ENCODE measurements at regions of chr20 and their contacts with region 1.

Region 1: GRCh38 chr20:9609887-9610502 is 95.6 kb downstream of the LAMP5 start:
- DNase-seq: peak; percentile 36
- H3K4me3 ChIP-seq: no peak overlapping the region
- H3K27ac ChIP-seq: no peak overlapping the region
- H3K27me3 ChIP-seq: peaks cover 8% of the 10 kb centered on the region
- CTCF ChIP-seq: peak; percentile 70

Region 2: GRCh38 chr20:9417665-9418064 is 192.3 kb before region 1 on chr20:
- CTCF ChIA-PET with region 1: interaction called, 34 read pairs
- POLR2A ChIA-PET with region 1: no interaction called
- DNase-seq: no peak
- H3K4me3 ChIP-seq: no peak overlapping the region
- H3K27ac ChIP-seq: no peak overlapping the region
- H3K27me3 ChIP-seq: no peaks in the 10 kb centered on the region
- CTCF ChIP-seq: no peak

Region 3: DNA sequence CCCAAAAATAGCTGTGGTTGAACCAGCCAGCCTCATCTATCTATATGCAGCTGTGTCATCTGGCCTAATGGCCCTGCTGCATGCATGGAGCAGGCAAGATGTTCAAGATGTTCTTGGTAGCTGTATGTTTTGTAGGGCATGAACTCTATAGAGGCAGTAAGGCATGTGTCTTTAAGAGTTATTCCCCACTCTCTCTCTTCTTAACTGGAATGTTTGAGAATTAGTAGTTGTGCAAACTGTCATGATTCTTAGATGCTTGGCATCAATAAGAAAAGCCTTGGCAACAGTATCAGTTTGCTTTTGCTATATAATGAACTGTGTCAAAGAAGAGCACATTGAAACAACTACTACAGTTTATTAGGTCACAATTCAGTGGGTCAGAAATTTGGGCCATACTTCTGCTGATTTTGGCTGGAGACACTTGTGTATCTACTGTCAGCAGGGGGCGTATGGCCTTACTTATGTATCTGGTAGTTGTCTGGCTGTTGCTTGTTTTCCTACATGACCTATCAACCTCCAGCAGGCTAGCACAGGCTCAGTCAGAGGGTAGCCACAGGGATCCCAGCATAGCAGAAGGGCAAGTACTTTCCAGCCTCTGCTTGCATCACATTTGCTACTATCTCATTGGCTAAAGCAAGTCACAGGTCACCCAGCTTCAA is 151.7 kb before region 1 on chr20:
- CTCF ChIA-PET with region 1: interaction called, 39 read pairs
- POLR2A ChIA-PET with region 1: no interaction called
- DNase-seq: no peak
- H3K4me3 ChIP-seq: no peak overlapping the region
- H3K27ac ChIP-seq: no peak overlapping the region
- H3K27me3 ChIP-seq: no peaks in the 10 kb centered on the region
- CTCF ChIP-seq: peak; percentile 34; the same call in 1 of the 2 replicates

Region 4: GRCh38 chr20:9496155-9496554 is 113.8 kb before region 1 on chr20:
- CTCF ChIA-PET with region 1: interaction called, 15 read pairs
- POLR2A ChIA-PET with region 1: no interaction called
- DNase-seq: no peak
- H3K4me3 ChIP-seq: no peak overlapping the region
- H3K27ac ChIP-seq: no peak overlapping the region
- H3K27me3 ChIP-seq: peaks cover 2% of the 10 kb centered on the region
- CTCF ChIP-seq: no peak

Region 5: DNA sequence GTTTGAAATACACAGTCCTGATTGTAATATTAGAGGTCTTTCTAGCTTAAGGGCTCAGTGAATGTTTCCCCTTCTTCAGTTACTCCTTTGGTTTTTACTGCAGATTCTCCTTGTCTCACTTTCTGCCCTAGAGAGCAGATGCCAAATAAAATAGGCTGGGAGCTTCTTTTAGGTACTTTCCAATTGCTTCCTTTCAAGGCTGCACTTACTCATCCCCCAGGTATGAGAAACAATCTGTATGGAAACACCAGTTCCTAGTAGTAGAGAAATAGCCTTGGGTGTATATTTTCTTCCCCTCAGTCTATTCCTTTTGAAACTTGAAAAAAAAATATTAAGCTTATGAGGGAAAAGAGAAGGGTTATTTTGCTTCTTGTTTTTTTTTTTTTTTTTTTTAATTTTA is 89.2 kb after region 1 on chr20:
- CTCF ChIA-PET with region 1: interaction called, 14 read pairs
- POLR2A ChIA-PET with region 1: no interaction called
- DNase-seq: no peak
- H3K4me3 ChIP-seq: no peak overlapping the region
- H3K27ac ChIP-seq: no peak overlapping the region
- H3K27me3 ChIP-seq: no peaks in the 10 kb centered on the region
- CTCF ChIP-seq: no peak

Region 6: GRCh38 chr20:9736373-9736772 is 126.4 kb after region 1 on chr20:
- CTCF ChIA-PET with region 1: no interaction called
- POLR2A ChIA-PET with region 1: no interaction called
- DNase-seq: no peak
- H3K4me3 ChIP-seq: no peak overlapping the region
- H3K27ac ChIP-seq: no peak overlapping the region
- H3K27me3 ChIP-seq: no peaks in the 10 kb centered on the region
- CTCF ChIP-seq: no peak

Region 7: DNA sequence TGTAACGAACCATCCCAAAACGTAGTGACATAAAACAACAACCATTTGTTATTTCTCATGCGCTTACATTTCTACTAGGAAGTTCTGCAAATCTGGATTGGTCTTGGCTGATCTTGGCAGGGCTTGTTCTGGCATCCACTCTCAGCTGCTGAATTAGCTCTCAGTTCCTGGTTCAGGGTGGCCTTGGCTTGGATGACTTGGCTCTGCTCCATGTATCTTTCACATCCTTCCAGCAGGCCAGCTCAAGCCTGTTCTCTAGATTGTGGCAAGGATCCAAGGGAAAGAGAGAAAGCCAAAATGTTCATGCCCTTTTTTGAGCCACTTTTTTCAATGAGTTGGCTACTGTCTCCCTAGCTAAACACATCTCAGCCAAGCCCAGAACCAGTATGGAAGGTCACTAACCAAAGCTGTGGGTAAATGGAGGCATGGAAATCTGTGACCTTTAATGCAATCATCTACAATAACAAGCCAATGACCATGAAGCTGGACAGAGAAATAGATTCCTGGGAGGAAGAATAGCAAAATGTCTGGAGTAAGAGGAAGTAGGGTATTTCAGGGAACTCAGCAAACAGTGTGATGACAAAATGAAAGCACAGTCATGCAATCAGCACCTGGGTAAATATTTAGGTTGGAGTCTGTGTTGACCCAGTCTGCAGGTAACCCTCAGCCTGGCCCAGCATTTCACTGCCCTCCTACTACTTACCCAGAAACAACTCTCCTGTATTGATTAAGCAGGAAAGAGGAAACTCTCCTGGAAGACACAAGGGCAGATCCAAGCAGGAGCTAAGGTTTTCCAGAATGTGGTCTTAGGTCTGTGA is 576.0 kb after region 1 on chr20:
- CTCF ChIA-PET with region 1: no interaction called
- POLR2A ChIA-PET with region 1: no interaction called
- DNase-seq: no peak
- H3K4me3 ChIP-seq: no peak overlapping the region
- H3K27ac ChIP-seq: no peak overlapping the region
- H3K27me3 ChIP-seq: no peaks in the 10 kb centered on the region
- CTCF ChIP-seq: no peak

Region 8: DNA sequence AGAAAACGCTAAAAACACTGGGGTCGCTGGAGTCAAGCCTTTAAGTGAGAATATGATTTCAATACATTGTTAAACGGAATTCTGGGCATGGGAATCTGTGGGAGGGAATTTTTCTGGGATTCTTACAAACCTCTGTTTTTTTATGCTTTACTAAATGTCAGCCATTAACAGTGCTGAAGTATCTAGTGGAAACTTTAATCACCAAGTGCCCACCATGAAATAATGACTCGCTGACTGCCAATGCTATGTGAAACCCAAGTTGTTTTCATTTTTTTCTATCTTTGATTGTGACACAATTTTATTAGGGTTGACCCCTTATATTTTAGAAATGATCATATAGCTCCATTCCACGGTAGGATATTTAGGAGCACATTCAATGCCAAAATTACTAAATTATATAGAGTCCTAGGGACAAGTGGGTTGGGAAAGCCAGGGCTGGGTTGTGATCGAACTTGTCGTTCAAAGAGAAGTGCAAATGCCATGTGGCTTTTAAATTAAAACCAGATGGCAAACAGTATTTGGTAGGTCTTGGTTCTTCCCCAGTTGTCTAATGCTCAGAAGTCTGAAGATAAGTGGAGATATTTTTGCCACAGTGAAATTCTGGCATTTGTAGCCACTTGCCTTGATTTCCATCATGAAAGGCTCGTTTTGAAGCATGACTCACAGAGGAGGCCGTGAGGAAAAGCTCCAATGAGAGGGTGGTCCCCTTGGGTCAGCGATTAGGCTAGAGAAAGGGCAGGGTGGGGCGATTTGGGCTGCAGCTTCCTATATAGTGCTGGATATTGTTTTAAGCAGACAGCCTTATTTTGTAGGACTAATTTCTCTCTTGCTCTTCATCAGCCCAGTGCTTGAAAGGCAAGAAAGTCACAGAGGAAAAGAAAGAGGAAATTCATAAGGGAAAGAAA is 1318.2 kb after region 1 on chr20:
- CTCF ChIA-PET with region 1: interaction called, 10 read pairs
- POLR2A ChIA-PET with region 1: no interaction called
- DNase-seq: no peak
- H3K4me3 ChIP-seq: no peak overlapping the region
- H3K27ac ChIP-seq: no peak overlapping the region
- H3K27me3 ChIP-seq: no peaks in the 10 kb centered on the region
- CTCF ChIP-seq: no peak

Measured in AG04450 (cell line).